Left cardiac atrium (tissue), 4 donors: ENCODE measurements at regions of chr11 and their contacts with region 1.

Region 1: DNA sequence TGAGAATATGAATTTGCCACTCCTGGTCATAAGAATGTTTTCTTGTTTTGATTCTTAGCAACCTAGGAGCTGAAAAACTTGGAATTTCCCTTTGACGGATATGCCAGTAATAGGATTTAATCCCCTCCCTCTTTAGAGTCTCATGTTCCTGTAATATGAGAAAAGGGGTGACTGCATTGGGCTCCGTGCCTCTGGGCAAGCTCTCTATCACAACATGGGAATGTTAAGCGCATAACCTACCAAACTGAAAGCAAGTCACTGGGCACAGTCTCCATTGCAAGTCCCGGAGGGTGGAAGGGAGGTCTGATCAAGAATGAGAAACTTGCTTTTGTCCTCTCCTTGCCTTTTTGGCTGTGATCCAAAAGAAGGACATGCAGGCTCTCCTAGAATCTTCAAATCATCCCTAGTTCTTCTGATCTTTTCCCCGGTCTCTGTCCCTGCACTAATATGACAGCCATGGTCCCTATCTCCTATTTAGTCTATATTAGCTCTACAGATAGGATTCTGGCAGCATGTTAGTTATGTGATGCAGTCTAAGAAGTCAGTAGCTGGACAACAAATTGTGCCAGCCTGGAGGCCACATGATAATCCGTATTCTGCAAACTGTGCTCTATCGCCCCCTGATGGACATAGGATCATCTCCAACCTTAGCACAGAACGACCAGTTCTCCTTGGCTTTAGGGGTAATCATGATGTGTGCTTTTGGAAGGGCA is 11.7 kb downstream of the OR10D3 start:
- DNase-seq: peak; percentile 33
- ATAC-seq: peak; percentile 63 to 85

Region 2: GRCh38 chr11:124070915-124071635 is 123.8 kb before region 1 on chr11:
- intact Hi-C with region 1: loop called in 1 of 2 experiments (anchors 5 kb)
- DNase-seq: peak; percentile 52
- ATAC-seq: peak; percentile 44 to 50

Region 3: DNA sequence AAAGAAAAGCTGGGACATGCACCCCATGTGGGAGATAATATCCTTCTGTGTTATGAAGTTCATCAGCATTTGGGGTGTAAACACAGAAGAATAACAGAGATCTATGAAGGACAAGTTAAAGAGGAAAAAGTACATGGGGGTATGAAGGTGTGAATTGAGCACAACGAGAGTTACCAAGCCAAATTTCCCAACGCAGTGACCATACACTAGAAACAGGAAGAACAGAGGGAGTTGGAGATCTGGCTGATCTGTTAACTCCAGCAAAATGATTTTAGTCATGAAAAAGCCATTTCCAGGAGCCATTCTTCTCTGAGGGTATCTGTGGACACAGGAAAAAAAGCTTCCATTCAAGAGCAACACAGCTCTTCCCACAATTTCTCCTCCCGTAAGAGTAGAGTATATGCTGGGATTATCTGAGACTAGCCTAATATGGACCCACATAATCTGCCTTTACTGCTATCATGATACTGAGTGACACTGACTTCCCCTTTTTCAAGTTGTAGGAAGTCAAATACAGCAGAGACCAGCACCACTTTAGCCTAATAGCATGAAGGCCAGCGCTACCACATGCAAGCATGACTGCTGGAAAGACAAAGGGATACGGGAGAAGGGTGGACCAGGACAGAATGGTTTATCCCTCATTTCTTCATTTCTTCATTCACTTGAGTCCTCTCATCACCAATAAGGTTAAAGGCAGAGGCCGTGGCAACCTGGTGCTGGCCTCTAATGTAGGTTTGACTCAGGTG is 144.7 kb after region 1 on chr11:
- intact Hi-C with region 1: no loop called
- DNase-seq: no peak
- ATAC-seq: no peak